Gastrocnemius medialis (tissue), 4 donors: ENCODE measurements at regions of chr19 and their contacts with region 1.

Region 1: DNA sequence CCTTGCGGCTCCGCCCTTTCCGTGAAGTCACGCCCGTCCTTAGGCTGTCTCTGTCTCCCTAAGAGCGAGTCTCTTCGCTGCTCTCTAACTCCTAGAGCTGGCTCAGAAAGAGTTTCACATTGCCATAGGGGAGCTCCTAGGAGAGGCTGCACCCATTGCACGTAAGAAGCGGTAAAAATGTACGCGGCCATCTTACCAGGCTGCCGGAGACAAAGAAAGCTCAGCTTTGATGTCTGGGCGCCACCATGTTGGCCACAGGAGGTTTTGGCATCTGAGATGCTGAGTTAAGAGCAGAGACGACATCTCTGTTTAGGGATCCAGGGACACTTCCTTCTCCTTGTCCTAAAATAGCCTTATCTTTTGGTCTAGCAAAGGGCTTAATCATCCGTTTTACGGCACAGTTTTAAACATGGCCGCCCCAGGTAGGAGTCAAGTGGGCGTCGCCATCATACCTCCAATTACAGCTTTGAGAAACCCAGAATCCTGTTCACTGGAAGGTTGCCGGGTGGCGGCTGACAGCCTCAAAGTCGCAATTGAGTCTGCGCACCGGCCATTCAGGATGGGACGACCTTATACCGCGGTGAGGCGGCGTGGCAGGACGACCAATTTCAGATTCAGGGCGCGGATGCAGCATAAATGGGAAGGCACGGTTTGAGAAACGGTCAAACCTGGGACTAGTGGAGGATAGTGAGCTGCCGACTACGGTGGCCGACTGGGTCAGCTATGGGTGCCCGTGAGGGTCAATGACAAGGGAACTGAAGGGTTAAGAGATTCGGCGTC is at the start of gene ZNF793:
- DNase-seq: peak; percentile 26 to 58
- ATAC-seq: peak; percentile 87 to 92
- H3K4me3 ChIP-seq: peak within 1 kb of the TSS; percentile 59 to 78 (median 76)
- H3K27ac ChIP-seq: peak within 1 kb of the TSS; percentile 78 to 85 (median 82)
- H3K4me1 ChIP-seq: peaks cover 0 to 4% of the 10 kb centered on the region in 2 donors
- H3K27me3 ChIP-seq: no peaks in the 10 kb centered on the region
- CTCF ChIP-seq: peak in 1 of 5 experiments; percentile 28
- POLR2A ChIP-seq: peak in 1 of 2 donors; percentile 7
- total RNA-seq, gene ZNF793: 0.19 to 1.2 (median 0.76) TPM

Region 2: GRCh38 chr19:37172368-37173366 is 333.9 kb before region 1 on chr19 and contains the start of gene ZNF585A:
- in situ Hi-C with region 1: no loop called
- intact Hi-C with region 1: loop called (anchors 2 kb)
- DNase-seq: peak; percentile 90 to 93
- ATAC-seq: peak; percentile 100
- H3K4me3 ChIP-seq: peak within 1 kb of the TSS; percentile 74 to 85 (median 80)
- H3K27ac ChIP-seq: peak within 1 kb of the TSS; percentile 80 to 90 (median 84)
- H3K4me1 ChIP-seq: peaks cover 7 to 12% of the 10 kb centered on the region in 2 donors
- H3K27me3 ChIP-seq: no peaks in the 10 kb centered on the region
- CTCF ChIP-seq: peak in 2 of 5 experiments; percentile 21 to 32
- POLR2A ChIP-seq: peak in 1 of 2 donors; percentile 14
- total RNA-seq, gene ZNF585A: 2.0 to 10.5 (median 6.0) TPM